Caco-2 (cell line): ENCODE measurements at regions of chr12 and their contacts with region 1.

Region 1: GRCh38 chr12:98424726-98425401 is 90.5 kb upstream of the TMPO start:
- DNase-seq: peak; percentile 69 to 75
- H3K4me3 ChIP-seq: no peak overlapping the region
- H3K4me3 Mint-ChIP-seq: no peak overlapping the region
- H3K27ac Mint-ChIP-seq: no peak overlapping the region
- H3K4me1 ChIP-seq: peaks cover 6% of the 10 kb centered on the region; the same call in 1 of the 2 replicates
- H3K4me1 Mint-ChIP-seq: peaks cover 2% of the 10 kb centered on the region
- H3K27me3 ChIP-seq: no peaks in the 10 kb centered on the region
- H3K27me3 Mint-ChIP-seq: no peaks in the 10 kb centered on the region
- CTCF ChIP-seq: peak; percentile 75

Region 2: GRCh38 chr12:98408681-98409080 is 16.2 kb before region 1 on chr12:
- CTCF ChIA-PET with region 1: no interaction called
- POLR2A ChIA-PET with region 1: no interaction called
- intact Hi-C with region 1: no loop called
- DNase-seq: no peak
- H3K4me3 ChIP-seq: no peak overlapping the region
- H3K4me3 Mint-ChIP-seq: no peak overlapping the region
- H3K27ac Mint-ChIP-seq: no peak overlapping the region
- H3K4me1 ChIP-seq: no peaks in the 10 kb centered on the region
- H3K4me1 Mint-ChIP-seq: no peaks in the 10 kb centered on the region
- H3K27me3 ChIP-seq: no peaks in the 10 kb centered on the region
- H3K27me3 Mint-ChIP-seq: no peaks in the 10 kb centered on the region
- CTCF ChIP-seq: no peak

Region 3: GRCh38 chr12:98456576-98457573 is 32.0 kb after region 1 on chr12:
- CTCF ChIA-PET with region 1: interaction called, 5 read pairs
- POLR2A ChIA-PET with region 1: interaction called, 3 read pairs
- intact Hi-C with region 1: loop called (anchors 1 kb)
- DNase-seq: peak; percentile 40 to 62
- H3K4me3 ChIP-seq: peak overlapping the region; percentile 39
- H3K4me3 Mint-ChIP-seq: peak overlapping the region; percentile 78
- H3K27ac Mint-ChIP-seq: peak overlapping the region; percentile 50
- H3K4me1 ChIP-seq: no peaks in the 10 kb centered on the region
- H3K4me1 Mint-ChIP-seq: no peaks in the 10 kb centered on the region
- H3K27me3 ChIP-seq: no peaks in the 10 kb centered on the region
- H3K27me3 Mint-ChIP-seq: no peaks in the 10 kb centered on the region
- CTCF ChIP-seq: no peak

Region 4: DNA sequence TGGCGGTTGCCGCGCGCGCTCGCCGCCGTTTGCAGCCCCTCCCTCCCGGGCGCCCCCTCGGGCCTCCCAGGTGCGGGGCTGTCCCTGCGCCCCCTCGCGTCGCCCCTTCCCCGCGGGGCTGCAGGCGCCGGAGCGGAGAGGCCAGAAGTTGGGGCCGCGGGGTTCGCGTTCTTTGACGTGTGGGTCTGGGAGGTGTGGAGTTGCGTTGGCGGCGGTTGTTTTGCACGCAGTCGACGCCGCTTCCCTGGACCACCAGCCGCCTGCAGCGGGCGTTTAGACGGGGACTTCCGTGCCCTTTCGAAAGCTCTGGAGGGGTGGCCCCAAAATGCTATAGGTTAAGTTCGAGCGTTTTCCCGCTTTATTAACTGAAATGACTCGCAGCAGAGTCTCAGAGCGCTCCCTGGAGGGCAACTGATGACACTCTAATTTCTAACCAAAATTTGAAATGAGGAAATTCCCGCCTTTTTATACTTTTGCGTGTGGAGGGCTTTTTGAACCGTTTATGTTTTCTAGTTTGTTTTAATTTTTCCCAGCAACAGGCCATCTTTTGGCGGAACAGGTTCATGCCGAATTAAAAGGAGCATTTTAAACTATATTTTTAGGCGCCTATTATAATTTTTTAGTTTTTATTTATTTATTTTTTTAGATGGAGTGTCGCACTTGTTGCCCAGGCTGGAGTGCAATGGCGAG is 91.5 kb after region 1 on chr12:
- CTCF ChIA-PET with region 1: interaction called, 6 read pairs
- POLR2A ChIA-PET with region 1: no interaction called
- intact Hi-C with region 1: loop called (anchors 1 kb)
- DNase-seq: peak; percentile 86 to 88
- H3K4me3 ChIP-seq: peak overlapping the region; percentile 99
- H3K4me3 Mint-ChIP-seq: peak overlapping the region; percentile 72
- H3K27ac Mint-ChIP-seq: peak overlapping the region; percentile 98
- H3K4me1 ChIP-seq: peaks cover 20% of the 10 kb centered on the region
- H3K4me1 Mint-ChIP-seq: peaks cover 15% of the 10 kb centered on the region
- H3K27me3 ChIP-seq: no peaks in the 10 kb centered on the region
- H3K27me3 Mint-ChIP-seq: no peaks in the 10 kb centered on the region
- CTCF ChIP-seq: peak; percentile 55 to 61

Region 5: GRCh38 chr12:98532681-98533304 is 107.9 kb after region 1 on chr12:
- CTCF ChIA-PET with region 1: interaction called, 3 read pairs
- POLR2A ChIA-PET with region 1: no interaction called
- intact Hi-C with region 1: loop called (anchors 1 kb)
- DNase-seq: peak in 1 of 2 experiments; percentile 77
- H3K4me3 ChIP-seq: no peak overlapping the region
- H3K4me3 Mint-ChIP-seq: no peak overlapping the region
- H3K27ac Mint-ChIP-seq: peak overlapping the region; percentile 69
- H3K4me1 ChIP-seq: peaks cover 19% of the 10 kb centered on the region
- H3K4me1 Mint-ChIP-seq: peaks cover 4% of the 10 kb centered on the region
- H3K27me3 ChIP-seq: no peaks in the 10 kb centered on the region
- H3K27me3 Mint-ChIP-seq: no peaks in the 10 kb centered on the region
- CTCF ChIP-seq: peak; percentile 62 to 75